Activated CD4-positive, alpha-beta T cell treated with anti-CD3 and anti-CD28 coated beads for 36 hours (primary cell): ENCODE measurements at regions of chr9 and their contacts with region 1.

Region 1: GRCh38 chr9:26789959-26790358 is 102.6 kb downstream of the CAAP1 start:
- DNase-seq: no peak
- ATAC-seq: no peak
- H3K4me3 Mint-ChIP-seq: no peak overlapping the region
- H3K27ac Mint-ChIP-seq: no peak overlapping the region
- H3K4me1 Mint-ChIP-seq: no peaks in the 10 kb centered on the region
- H3K27me3 Mint-ChIP-seq: no peaks in the 10 kb centered on the region

Region 2: DNA sequence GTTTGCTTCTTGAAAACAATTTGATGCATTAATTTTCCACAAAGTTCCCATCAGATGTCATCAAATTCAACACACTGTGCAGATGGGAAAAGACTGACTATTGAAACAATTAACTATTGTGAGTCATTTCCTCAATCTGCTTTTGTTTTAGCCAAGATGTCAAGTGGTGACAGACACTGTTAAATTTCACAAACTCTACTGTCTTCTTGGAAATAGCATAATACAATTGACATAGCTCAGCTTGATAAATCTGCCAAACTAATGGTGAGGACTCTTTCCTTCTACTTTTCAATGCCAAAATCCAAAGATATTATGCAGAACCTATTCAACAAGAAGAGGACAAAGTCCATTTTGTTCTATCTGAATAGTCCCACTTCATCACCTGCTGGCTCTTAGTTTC is 139.6 kb before region 1 on chr9:
- CTCF ChIA-PET with region 1: no interaction called
- POLR2A ChIA-PET with region 1: no interaction called
- intact Hi-C with region 1: no loop called
- DNase-seq: no peak
- ATAC-seq: no peak
- H3K4me3 Mint-ChIP-seq: no peak overlapping the region
- H3K27ac Mint-ChIP-seq: no peak overlapping the region
- H3K4me1 Mint-ChIP-seq: no peaks in the 10 kb centered on the region
- H3K27me3 Mint-ChIP-seq: peaks cover 5% of the 10 kb centered on the region

Region 3: DNA sequence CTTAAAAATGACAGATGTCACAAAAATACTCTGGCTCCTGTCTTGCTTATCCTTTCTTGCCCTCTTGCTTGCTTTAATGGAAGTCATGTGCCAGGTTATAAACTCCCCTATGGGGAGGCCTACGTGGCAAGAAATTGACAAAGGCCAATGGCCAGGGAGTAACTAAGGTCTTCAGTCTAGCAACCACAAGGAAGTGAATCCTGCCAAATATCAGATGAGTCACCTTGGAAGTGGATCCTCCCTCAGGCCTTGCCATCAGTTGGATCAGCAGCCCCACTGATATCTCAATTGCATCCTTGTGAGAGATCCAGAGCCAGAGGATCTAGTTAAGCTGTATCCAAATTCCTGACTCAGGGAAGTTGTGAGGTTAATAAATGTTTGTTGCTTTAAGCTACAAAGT is 19.8 kb after region 1 on chr9:
- CTCF ChIA-PET with region 1: no interaction called
- POLR2A ChIA-PET with region 1: no interaction called
- intact Hi-C with region 1: loop called in 1 of 2 experiments (anchors 2 kb)
- DNase-seq: no peak
- ATAC-seq: no peak
- H3K4me3 Mint-ChIP-seq: no peak overlapping the region
- H3K27ac Mint-ChIP-seq: no peak overlapping the region
- H3K4me1 Mint-ChIP-seq: no peaks in the 10 kb centered on the region
- H3K27me3 Mint-ChIP-seq: peaks cover 2% of the 10 kb centered on the region

Region 4: GRCh38 chr9:27847818-27848217 is 1057.9 kb after region 1 on chr9:
- CTCF ChIA-PET with region 1: no interaction called
- POLR2A ChIA-PET with region 1: no interaction called
- intact Hi-C with region 1: no loop called
- DNase-seq: no peak
- ATAC-seq: no peak
- H3K4me3 Mint-ChIP-seq: no peak overlapping the region
- H3K27ac Mint-ChIP-seq: no peak overlapping the region
- H3K4me1 Mint-ChIP-seq: no peaks in the 10 kb centered on the region
- H3K27me3 Mint-ChIP-seq: peaks cover 7% of the 10 kb centered on the region